ENCODE measurements at regions of chr9 and their contacts with region 1.

Region 1: DNA sequence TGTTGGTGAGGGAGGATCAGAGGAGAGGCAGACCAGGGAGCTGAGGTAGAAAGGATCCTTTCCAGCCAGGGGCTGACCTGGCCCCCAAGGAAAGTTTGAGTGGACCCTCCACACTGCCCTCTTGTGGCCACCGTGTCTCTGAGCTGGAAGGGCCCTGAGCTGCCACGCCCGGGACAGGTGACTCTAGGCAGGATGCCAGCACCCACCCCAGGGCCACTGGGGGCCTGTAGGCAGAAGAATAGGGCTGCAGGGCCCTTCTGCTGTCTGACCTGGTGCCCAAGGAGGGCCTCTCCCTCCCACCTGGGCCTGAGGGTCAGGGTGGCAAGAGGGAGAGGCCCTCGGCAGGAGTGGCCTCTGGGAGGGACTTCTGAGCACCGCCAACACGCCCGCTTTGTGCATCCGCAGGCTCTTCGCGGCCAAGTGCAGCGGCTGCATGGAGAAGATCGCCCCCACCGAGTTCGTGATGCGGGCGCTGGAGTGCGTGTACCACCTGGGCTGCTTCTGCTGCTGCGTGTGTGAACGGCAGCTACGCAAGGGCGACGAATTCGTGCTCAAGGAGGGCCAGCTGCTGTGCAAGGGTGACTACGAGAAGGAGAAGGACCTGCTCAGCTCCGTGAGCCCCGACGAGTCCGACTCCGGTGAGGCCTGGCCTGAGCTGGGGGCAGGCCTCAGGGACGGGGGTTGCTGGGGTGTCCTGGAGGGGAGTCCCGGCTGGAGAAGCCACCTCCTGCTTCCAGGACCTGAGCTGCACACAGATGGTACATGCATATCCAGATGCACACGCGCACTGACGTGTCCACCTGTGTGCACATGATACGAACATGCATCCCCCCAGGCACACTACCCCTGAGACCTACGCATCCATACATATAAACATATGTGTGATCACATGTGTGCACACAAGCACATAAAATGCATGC is 77.0 kb downstream of the LMX1B start:
- DNase-seq: peak; percentile 29
- H3K4me3 ChIP-seq: no peak overlapping the region
- H3K27ac ChIP-seq: no peak overlapping the region
- H3K4me1 ChIP-seq: no peaks in the 10 kb centered on the region
- H3K27me3 ChIP-seq: peaks cover 40% of the 10 kb centered on the region
- CTCF ChIP-seq: peak; percentile 81

Region 2: DNA sequence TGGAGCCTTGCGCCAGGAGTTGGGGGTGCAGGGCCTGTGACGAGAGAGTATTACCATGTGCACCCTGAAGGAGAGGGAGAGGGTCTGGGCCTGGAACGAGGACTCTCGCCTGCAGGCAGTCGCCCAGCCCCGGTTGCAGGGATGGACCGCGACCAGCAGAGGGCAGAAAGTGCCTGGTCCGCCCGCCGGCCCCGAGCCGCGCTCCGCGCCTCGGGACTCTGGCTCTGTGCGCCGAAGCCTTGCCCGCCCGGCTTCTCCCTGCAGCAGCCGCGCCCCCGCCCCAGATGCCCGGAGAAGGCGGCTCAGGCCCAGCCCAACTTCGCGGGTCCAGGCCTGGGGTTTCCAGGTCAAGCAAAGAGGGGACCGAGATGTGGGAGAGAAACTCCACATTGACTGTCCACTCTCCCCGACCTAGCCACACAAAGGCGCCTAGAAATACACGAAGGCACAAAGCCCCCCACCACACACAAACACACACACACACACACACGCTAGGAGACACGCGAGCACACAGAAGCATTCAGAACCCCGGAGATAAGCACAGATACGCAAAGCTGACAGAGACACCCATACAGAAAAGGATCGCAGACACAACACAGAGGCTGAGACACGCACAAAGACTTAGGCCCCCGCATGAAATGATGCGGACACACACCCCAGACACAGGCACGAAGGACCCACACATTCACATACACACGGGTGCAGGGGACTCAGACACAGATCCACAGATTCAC is 78.9 kb before region 1 on chr9:
- CTCF ChIA-PET with region 1: no interaction called
- POLR2A ChIA-PET with region 1: no interaction called
- intact Hi-C with region 1: loop called (anchors 5 kb)
- DNase-seq: peak; percentile 80
- H3K4me3 ChIP-seq: no peak overlapping the region
- H3K27ac ChIP-seq: no peak overlapping the region
- H3K4me1 ChIP-seq: peaks cover 16% of the 10 kb centered on the region
- H3K27me3 ChIP-seq: peaks cover 94% of the 10 kb centered on the region
- CTCF ChIP-seq: peak; percentile 86

Region 3: GRCh38 chr9:126704873-126705766 is 14.4 kb after region 1 on chr9:
- CTCF ChIA-PET with region 1: interaction called, 10 read pairs
- POLR2A ChIA-PET with region 1: no interaction called
- intact Hi-C with region 1: no loop called
- DNase-seq: peak; percentile 81
- H3K4me3 ChIP-seq: peak overlapping the region; percentile 14
- H3K27ac ChIP-seq: no peak overlapping the region
- H3K4me1 ChIP-seq: peaks cover 17% of the 10 kb centered on the region
- H3K27me3 ChIP-seq: peaks cover 5% of the 10 kb centered on the region
- CTCF ChIP-seq: peak; percentile 93